Esophagus muscularis mucosa (tissue), 4 donors: ENCODE measurements at regions of chr13 and their contacts with region 1.

Region 1: DNA sequence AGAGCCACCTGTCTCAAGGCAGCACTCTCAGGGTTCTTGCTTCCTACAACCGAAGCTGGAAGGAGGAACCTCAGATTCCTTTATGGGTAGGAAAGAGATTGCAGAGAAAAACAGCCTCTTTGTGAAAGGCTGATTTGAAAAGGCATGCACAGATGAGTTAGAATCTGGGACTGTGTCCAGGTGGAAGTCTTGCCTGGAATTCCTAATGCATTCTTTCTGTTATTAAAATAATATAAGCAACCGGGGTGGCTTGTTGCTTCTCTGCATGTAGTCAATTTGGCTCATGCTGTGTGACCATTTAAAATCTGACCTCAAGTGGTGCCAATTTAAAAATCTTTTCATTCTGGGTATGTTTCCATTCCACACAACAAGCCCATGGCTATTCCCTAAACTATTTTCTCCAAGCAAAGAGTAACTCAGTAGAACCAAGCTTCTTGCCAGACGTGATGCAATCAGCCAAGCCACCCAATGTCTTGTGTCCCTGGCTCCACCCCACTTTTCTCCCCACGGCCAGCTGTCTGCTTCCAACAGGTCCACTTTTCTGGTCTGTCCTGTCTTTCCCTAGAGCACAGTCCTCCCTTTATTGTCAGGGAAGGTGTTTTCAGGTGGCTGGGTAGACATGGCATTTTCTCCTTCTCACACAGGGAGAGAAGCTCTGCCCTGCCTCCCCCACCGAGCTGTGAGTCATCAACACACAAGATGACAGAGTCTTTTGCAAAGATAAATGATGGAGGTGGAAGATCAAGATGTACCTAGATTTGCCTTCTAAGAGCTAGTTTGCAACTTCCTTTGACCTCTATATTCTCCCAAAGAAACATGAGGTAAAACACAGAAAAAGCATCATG is 394.3 kb downstream of the FOXO1 start:
- DNase-seq: no peak
- H3K4me3 ChIP-seq: peak overlapping the region in 1 of 4 donors; percentile 18
- H3K27ac ChIP-seq: peak overlapping the region; percentile 76 to 88 (median 82)
- H3K4me1 ChIP-seq: peaks cover 26 to 51% (median 45%) of the 10 kb centered on the region in 4 donors
- H3K27me3 ChIP-seq: no peaks in the 10 kb centered on the region
- CTCF ChIP-seq: no peak
- EP300 ChIP-seq: no peak
- POLR2A ChIP-seq: no peak

Region 2: DNA sequence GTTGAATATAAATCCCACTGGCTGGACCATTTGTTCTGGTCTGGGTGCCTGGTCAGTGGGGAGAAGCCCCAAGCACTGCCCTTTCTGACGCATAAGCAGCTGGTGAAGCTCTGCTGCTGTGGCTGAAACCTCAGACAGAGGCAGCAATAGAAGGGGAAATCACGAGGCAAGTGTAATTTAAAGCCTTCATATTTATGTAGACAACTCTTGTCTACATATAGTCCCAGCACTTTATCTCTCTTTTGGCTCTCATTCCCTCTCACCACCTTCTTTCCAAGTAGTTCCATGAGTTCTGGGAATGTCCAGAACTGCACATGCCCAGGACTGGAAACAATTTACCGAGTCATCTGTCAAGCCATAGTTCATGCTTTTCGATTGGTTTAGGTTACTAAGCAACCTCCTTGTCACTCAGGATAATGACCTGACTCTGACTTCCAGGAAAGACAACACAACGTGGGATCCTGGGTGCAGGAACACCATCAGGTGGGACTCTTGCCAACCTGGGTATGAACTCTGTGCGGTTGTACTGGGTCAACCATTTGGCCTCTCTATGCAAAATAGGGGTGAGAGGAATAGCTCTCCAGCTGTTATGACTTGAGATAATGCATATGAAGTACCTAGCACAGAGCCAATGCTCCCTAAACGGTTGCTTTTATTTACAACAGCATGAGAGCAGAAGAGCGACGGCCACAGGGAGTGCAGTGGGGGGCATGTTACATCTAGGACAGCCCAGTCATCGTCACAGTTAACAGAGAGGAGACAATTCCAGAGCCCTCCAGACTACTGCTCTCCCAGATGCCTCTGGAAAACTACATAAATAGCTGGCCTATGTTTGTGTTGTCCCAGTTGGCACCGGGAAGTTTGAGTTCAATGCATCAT is 72.4 kb after region 1 on chr13:
- intact Hi-C with region 1: loop called (anchors 5 kb)
- DNase-seq: no peak
- H3K4me3 ChIP-seq: no peak overlapping the region
- H3K27ac ChIP-seq: peak overlapping the region in 2 of 4 donors; percentile 21 to 37
- H3K4me1 ChIP-seq: peaks cover 18 to 87% (median 74%) of the 10 kb centered on the region in 4 donors
- H3K27me3 ChIP-seq: no peaks in the 10 kb centered on the region
- CTCF ChIP-seq: no peak
- EP300 ChIP-seq: peak; percentile 56
- POLR2A ChIP-seq: no peak

Region 3: DNA sequence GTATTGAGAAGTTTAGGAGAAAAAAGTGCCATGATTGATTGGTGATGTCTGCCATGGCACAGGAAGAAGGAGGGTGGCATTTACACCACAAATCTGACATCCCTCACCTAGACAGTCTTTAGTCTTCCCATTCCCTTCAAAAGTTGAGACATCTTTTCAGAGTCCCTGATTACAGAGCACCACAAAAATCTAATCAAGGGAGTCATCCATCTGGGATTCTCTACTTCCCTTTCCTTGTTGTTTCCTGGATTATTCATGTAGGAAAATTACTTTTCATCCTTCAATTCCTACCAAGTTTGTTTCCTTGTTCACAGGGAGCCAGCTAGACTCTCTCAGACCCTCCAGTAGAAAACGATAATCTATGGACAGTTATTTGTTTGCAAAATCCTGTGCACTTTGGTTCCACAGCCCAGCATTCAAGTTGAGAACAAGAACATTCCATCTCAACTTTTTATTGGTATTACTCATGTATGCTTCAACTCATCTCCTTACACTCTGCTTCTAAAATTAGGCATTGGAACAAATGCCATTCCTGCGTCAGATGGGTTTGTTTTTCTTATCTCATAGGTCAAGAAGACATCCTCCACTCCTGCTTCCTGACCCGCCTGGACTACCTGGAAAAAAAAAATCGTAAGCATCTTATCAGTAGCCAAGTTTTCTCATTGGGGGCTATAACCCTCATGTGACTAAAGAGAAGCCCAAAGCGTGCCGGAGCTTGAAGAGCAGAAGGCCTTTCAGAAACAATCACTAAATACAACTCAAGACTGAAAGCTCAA is 134.4 kb after region 1 on chr13:
- intact Hi-C with region 1: loop called (anchors 5 kb)
- DNase-seq: peak; percentile 81
- H3K4me3 ChIP-seq: no peak overlapping the region
- H3K27ac ChIP-seq: peak overlapping the region; percentile 73 to 83 (median 76)
- H3K4me1 ChIP-seq: peaks cover 29 to 54% (median 52%) of the 10 kb centered on the region in 4 donors
- H3K27me3 ChIP-seq: no peaks in the 10 kb centered on the region
- CTCF ChIP-seq: no peak
- EP300 ChIP-seq: peak; percentile 32
- POLR2A ChIP-seq: no peak